H1 (cell line): ENCODE measurements at regions of chr17 and their contacts with region 1.

Region 1: GRCh38 chr17:59139939-59140338 is 15.0 kb downstream of the SKA2 start:
- DNase-seq: no peak
- H3K4me3 ChIP-seq: no peak overlapping the region
- H3K27ac ChIP-seq: no peak overlapping the region
- H3K4me1 ChIP-seq: peaks cover 0 to 3% (median 0%) of the 10 kb centered on the region in 4 experiments; a peak in 1 of 7 replicates
- H3K27me3 ChIP-seq: no peaks in the 10 kb centered on the region
- CTCF ChIP-seq: no peak
- EP300 ChIP-seq: no peak
- POLR2A ChIP-seq: no peak
- RAD21 ChIP-seq: no peak

Region 2: DNA sequence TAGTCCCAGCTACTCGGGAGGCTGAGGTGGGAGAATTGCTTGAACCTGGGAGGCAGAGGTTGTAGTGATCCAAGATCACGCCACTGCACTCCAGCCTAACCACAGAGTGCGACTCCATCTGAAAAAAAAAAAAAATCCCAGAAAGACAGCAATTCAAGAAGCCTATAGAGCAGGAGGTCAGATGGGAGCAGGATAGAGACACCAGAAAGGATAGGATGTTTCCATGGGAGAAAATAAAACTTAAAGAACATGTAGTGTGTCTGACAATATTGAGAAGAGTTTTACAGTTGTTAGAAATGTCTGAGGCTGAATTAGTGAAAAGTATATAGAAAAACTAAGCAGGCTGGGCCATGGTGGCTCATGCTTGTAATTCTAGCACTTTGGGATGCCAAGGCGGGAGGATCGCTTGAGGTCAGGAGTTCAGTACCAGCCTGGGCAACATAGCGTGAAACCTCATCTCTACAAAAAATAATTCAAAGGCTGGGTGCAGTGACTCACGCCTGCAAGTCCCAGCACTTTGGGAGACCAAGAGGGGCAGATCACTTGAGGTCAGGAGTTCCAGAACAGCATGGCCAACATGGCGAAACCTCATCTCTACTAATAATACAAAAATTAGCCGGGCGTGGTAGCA is 18.0 kb before region 1 on chr17:
- CTCF ChIA-PET with region 1: no interaction called
- POLR2A ChIA-PET with region 1: no interaction called
- DNase-seq: no peak
- H3K4me3 ChIP-seq: no peak overlapping the region
- H3K27ac ChIP-seq: no peak overlapping the region
- H3K4me1 ChIP-seq: no peaks in the 10 kb centered on the region
- H3K27me3 ChIP-seq: no peaks in the 10 kb centered on the region
- CTCF ChIP-seq: no peak
- EP300 ChIP-seq: no peak
- POLR2A ChIP-seq: no peak
- RAD21 ChIP-seq: no peak

Region 3: DNA sequence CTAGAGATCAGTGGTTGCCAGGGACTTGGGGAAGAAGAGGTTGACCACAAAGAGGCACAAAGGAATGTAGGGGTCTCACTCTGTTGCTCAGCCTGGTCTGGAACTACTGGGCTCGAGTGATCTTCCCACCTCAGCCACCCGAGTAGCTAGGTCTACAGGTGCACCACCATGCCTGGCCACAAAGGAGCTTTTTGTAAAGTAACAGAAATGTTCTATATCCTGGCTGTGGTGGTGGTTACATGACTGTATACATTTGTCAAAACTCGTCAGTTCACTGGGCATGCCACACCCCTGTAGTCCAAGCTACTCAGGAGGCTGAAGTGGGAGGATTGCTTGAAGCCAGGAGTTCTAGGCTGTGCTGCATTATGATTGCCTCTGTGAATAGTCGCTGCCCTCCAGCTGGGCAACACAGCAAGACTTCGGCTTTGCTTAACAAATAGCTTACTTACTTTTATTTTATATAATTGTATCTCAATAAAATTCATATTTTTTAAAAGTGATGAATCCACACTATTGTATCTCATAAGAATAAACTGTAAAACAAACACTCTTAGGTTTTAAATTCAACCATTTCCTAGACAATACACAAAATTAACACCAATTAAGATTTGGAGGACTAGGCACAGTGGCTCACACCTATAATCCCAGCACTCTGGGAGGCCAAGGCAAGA is 10.0 kb after region 1 on chr17:
- CTCF ChIA-PET with region 1: no interaction called
- POLR2A ChIA-PET with region 1: interaction called, 14 read pairs
- DNase-seq: no peak
- H3K4me3 ChIP-seq: no peak overlapping the region
- H3K27ac ChIP-seq: no peak overlapping the region
- H3K4me1 ChIP-seq: peaks cover 0 to 8% (median 3%) of the 10 kb centered on the region in 4 experiments; a peak in 3 of 7 replicates
- H3K27me3 ChIP-seq: no peaks in the 10 kb centered on the region
- CTCF ChIP-seq: no peak
- EP300 ChIP-seq: no peak
- POLR2A ChIP-seq: no peak; a peak in 1 of 3 replicates
- RAD21 ChIP-seq: no peak